ENCODE measurements at regions of chr5 and their contacts with region 1.

Region 1: DNA sequence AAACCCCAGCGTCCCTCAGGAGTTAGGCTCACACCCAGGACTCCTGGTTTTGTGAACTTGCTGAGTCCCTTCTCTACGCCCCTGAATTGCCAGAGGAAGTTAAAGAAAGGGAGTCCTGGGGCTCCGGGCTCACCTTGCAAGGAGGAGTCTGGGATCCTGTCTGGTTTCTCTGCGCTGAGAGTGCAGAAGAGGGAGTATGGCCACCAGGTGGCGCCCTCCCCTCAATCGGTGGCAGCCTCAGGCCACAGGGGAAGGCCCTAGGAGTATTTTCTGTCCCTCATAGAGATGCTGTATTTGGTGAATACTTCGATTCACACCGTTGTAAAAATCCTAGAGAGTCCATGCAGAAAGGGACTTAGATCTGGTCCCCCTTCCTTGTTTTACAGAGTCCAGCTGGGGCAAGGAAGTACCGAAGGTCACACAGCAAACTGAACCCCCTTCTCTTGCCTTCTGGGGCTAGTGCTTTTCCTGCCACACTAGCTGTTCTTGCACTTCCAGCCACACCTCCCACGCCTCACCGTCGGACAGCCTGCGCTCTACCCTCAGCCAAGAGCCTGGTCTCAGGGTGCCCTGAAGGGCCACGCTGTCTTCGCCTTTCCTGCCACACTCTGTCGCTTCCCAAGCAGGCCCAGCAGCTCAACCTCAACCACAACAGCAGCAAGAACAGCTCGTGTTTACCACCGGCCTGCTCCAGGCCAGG is 10.2 kb downstream of the HAND1 start:
- DNase-seq: peak; percentile 62 to 79 (median 71)
- H3K4me3 ChIP-seq: no peak overlapping the region
- H3K27ac ChIP-seq: no peak overlapping the region
- H3K4me1 ChIP-seq: peaks cover 0 to 4% (median 0%) of the 10 kb centered on the region in 4 experiments
- H3K27me3 ChIP-seq: peaks cover 26 to 51% (median 30%) of the 10 kb centered on the region in 5 experiments

Region 2: GRCh38 chr5:154603978-154604679 is 136.3 kb after region 1 on chr5:
- CTCF ChIA-PET with region 1: interaction called, 117 read pairs
- POLR2A ChIA-PET with region 1: interaction called, 3 read pairs
- DNase-seq: peak; percentile 15 to 53 (median 28)
- H3K4me3 ChIP-seq: no peak overlapping the region
- H3K27ac ChIP-seq: no peak overlapping the region
- H3K4me1 ChIP-seq: peaks cover 0 to 7% (median 2%) of the 10 kb centered on the region in 4 experiments
- H3K27me3 ChIP-seq: peaks cover 5 to 43% (median 24%) of the 10 kb centered on the region in 5 experiments

Region 3: GRCh38 chr5:154610321-154611154 is 142.7 kb after region 1 on chr5:
- CTCF ChIA-PET with region 1: interaction called, 117 read pairs
- POLR2A ChIA-PET with region 1: interaction called, 3 read pairs
- DNase-seq: peak; percentile 79 to 87 (median 86)
- H3K4me3 ChIP-seq: peak overlapping the region in 6 of 7 experiments; percentile 22 to 61 (median 41)
- H3K27ac ChIP-seq: no peak overlapping the region
- H3K4me1 ChIP-seq: peaks cover 0 to 13% (median 13%) of the 10 kb centered on the region in 4 experiments
- H3K27me3 ChIP-seq: peaks cover 12 to 75% (median 27%) of the 10 kb centered on the region in 5 experiments

Measured in common myeloid progenitor, CD34-positive (primary cell).